ENCODE measurements at regions of chr1 and their contacts with region 1.

Region 1: DNA sequence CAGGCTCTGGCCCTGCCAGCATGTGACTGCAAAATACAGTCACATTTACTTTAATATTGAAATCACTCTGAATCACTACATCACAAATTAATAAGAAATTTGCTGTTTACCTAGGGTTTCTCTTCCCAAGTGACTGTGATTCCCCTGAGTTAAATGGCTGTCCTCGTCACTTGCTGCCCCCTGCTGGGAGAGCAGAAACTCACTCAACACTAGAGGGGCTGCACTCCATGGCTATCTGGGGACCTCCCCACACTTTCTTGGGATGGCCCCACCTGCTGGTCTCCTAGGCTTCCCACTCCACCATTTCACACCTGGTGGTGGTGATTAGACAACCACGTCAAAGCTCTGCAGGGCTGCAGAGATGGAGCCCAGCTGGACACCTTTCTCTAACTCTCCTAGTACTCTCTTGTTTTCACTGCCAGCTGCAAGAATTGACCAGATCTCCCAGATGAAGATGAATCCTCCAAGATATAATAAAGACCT is 63.4 kb downstream of the CD2 start:
- H3K4me3 Mint-ChIP-seq: no peak overlapping the region
- H3K27ac Mint-ChIP-seq: no peak overlapping the region
- H3K4me1 Mint-ChIP-seq: peaks cover 4% of the 10 kb centered on the region
- H3K27me3 Mint-ChIP-seq: no peaks in the 10 kb centered on the region

Region 2: DNA sequence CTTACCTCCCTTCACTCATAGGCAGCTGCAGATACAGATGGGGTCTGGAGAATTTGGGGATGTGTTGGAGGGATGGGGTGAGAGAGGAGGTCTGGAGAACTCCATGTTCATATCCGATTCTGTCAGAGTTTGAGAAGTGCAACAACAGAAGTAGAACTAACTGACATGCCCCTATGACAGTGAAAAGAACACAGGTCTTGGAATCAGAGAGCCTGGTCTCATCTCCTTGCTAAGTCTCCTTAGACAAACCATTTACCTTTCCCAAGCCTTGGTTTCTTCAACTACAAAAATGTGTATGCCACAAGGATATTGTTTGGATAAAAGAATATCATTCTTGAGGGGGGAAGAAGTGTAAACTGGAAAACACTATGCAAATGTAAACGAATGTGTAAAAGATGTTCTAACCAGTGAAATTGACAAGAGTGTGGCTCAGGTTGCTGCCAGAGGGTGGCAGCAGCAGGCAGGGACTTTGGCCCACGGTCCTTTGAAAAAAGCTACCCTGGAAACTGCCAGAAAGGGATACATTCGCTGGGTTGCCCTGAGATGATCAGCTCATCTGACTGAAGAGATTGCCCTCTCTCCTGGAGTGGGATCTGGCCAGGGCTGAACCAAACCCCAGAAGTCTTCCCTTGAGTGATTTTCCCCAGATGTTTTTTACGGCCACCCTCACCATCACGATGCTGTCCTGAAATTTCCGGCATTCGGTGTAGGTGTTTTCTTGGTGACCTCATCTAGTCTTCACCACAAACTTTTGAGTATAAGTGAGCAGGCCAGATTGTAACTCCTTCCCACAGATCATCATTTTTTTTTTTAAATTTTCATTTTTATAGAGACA is 80.4 kb before region 1 on chr1:
- intact Hi-C with region 1: loop called (anchors 1 kb)
- H3K4me3 Mint-ChIP-seq: no peak overlapping the region
- H3K27ac Mint-ChIP-seq: no peak overlapping the region
- H3K4me1 Mint-ChIP-seq: peaks cover 47% of the 10 kb centered on the region
- H3K27me3 Mint-ChIP-seq: no peaks in the 10 kb centered on the region

Region 3: DNA sequence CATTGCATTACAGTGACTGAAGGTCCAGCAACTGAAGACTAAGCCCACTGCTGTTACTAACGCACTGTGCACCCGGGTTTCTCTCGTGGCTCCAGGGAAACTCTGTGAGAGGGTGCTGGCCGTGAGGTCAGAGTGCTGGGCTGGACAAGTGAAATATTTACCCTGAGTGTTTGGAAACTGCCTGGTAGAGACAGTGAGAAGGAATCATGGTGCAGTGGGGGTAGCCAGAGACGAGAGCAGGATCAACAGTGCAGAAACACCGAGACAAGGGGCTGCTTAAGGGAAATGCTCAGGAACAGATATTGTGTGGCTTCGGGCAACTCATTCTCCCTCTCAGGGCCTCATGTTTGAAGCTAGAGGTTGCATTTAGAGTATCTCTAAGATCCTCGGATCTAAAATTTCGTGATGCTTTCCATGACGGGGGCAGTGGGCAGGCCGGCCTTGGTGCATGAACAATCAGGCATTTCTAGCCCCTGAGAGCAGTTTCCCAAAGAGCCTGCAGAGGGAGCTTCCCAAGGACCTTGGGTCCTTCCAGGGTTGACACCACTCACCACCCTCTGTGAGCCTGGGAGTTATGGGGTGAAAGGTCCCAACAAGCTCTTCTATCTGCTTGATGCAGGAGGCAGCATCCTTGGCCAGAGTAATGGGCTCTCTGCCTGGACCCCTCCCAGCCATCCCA is 53.7 kb before region 1 on chr1:
- intact Hi-C with region 1: loop called (anchors 2 kb)
- H3K4me3 Mint-ChIP-seq: no peak overlapping the region
- H3K27ac Mint-ChIP-seq: peak overlapping the region; percentile 36
- H3K4me1 Mint-ChIP-seq: peaks cover 54% of the 10 kb centered on the region
- H3K27me3 Mint-ChIP-seq: peaks cover 5% of the 10 kb centered on the region

Region 4: GRCh38 chr1:116794804-116795481 is 22.7 kb before region 1 on chr1:
- intact Hi-C with region 1: no loop called
- H3K4me3 Mint-ChIP-seq: peak overlapping the region; percentile 34
- H3K27ac Mint-ChIP-seq: peak overlapping the region; percentile 92
- H3K4me1 Mint-ChIP-seq: peaks cover 53% of the 10 kb centered on the region
- H3K27me3 Mint-ChIP-seq: no peaks in the 10 kb centered on the region

Region 5: GRCh38 chr1:117059678-117060440 is 242.2 kb after region 1 on chr1 and contains the start of gene TTF2:
- intact Hi-C with region 1: loop called (anchors 1 kb)
- H3K4me3 Mint-ChIP-seq: no peak within 1 kb of the TSS
- H3K27ac Mint-ChIP-seq: no peak within 1 kb of the TSS
- H3K4me1 Mint-ChIP-seq: peaks cover 15% of the 10 kb centered on the region
- H3K27me3 Mint-ChIP-seq: no peaks in the 10 kb centered on the region

Measured in dendritic cell treated with granulocyte-macrophage colony-stimulating factor and Interleukin-4, amounts not matched to agents 40 ng/mL and 50 ng/mL, for 4 days (primary cell).